Activated T-helper 2 cell treated with anti-CD3 and anti-CD28 coated beads, Interferon-gamma antibody, Interleukin-2, Interleukin-4, amounts not matched to agents 10 μg/mL and 5 μg/mL and 100 μg/mL, durations not matched to agents 14 hours and 24 hours and 36 hours (primary cell): ENCODE measurements at regions of chr4 and their contacts with region 1.

Region 1: DNA sequence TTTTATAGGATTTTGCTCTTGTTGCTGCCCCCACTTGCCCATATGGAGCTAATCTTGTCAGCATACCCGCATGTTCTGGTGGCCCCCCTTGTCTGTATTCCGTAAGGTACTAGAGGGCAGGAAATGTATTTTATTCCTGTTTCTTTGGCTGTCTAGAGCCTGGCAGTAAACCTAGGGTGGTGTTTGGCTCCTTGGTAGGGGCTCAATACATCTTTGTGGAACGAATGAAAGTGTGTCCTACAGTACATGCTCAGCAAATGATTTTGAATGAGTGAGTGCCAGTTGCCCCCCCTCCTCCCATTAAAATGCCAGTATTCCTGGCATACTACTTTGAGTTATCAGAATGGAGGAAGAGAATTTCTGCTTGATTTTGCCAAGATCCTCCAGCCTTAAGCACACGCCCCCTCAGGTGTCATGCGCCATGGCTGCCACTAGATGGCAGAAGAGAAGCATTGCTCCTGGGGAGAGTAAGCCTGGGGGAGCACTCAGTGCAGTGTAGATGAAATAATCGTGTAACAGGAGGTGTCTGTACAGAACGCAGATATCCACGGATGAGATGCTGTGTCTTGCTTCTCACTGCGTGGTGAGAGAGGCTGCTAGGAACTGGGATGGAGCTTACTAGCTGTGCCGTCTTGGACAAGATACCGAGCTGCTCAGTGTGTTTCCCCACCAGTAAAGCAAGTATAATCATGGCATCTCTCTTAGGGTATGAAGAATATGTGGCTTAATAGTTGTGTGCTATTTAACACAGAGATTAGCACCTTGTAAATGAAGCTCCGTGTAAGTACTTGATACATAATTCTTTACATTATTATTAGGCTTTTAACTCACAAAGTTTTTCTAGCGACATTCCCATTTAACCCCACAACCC is 17.2 kb upstream of the RNF212 start:
- DNase-seq: peak; percentile 69
- H3K4me3 Mint-ChIP-seq: no peak overlapping the region
- H3K27ac Mint-ChIP-seq: no peak overlapping the region
- H3K4me1 Mint-ChIP-seq: peaks cover 3% of the 10 kb centered on the region
- H3K27me3 Mint-ChIP-seq: peaks cover 20% of the 10 kb centered on the region

Region 2: GRCh38 chr4:1266881-1267763 is 136.6 kb after region 1 on chr4:
- intact Hi-C with region 1: loop called (anchors 1 kb)
- DNase-seq: no peak
- H3K4me3 Mint-ChIP-seq: peak overlapping the region; percentile 66
- H3K27ac Mint-ChIP-seq: peak overlapping the region; percentile 91
- H3K4me1 Mint-ChIP-seq: peaks cover 25% of the 10 kb centered on the region
- H3K27me3 Mint-ChIP-seq: no peaks in the 10 kb centered on the region

Region 3: GRCh38 chr4:1289207-1290164 is 158.9 kb after region 1 on chr4 and contains the start of gene MAEA:
- intact Hi-C with region 1: loop called (anchors 5 kb)
- DNase-seq: peak; percentile 98
- H3K4me3 Mint-ChIP-seq: peak within 1 kb of the TSS; percentile 97
- H3K27ac Mint-ChIP-seq: peak within 1 kb of the TSS; percentile 90
- H3K4me1 Mint-ChIP-seq: peaks cover 23% of the 10 kb centered on the region
- H3K27me3 Mint-ChIP-seq: no peaks in the 10 kb centered on the region
- total RNA-seq, gene MAEA: 59.2 and 62.8 TPM in 2 replicates

Region 4: GRCh38 chr4:1351854-1352633 is 221.5 kb after region 1 on chr4:
- intact Hi-C with region 1: loop called (anchors 1 kb)
- DNase-seq: peak; percentile 83
- H3K4me3 Mint-ChIP-seq: no peak overlapping the region
- H3K27ac Mint-ChIP-seq: peak overlapping the region; percentile 60
- H3K4me1 Mint-ChIP-seq: peaks cover 19% of the 10 kb centered on the region
- H3K27me3 Mint-ChIP-seq: no peaks in the 10 kb centered on the region